Ascending aorta (tissue), 2 donors: ENCODE measurements at regions of chr17 and their contacts with region 1.

Region 1: GRCh38 chr17:44210342-44211192 is 8.9 kb downstream of the UBTF start:
- DNase-seq: peak; percentile 67 to 94
- H3K4me3 ChIP-seq: peak overlapping the region in 1 of 2 donors; percentile 14
- H3K27ac ChIP-seq: peak overlapping the region; percentile 29 to 65
- H3K4me1 ChIP-seq: peaks cover 0 to 9% of the 10 kb centered on the region in 2 donors
- H3K27me3 ChIP-seq: no peaks in the 10 kb centered on the region
- CTCF ChIP-seq: peak; percentile 98 to 100 (median 100)

Region 2: DNA sequence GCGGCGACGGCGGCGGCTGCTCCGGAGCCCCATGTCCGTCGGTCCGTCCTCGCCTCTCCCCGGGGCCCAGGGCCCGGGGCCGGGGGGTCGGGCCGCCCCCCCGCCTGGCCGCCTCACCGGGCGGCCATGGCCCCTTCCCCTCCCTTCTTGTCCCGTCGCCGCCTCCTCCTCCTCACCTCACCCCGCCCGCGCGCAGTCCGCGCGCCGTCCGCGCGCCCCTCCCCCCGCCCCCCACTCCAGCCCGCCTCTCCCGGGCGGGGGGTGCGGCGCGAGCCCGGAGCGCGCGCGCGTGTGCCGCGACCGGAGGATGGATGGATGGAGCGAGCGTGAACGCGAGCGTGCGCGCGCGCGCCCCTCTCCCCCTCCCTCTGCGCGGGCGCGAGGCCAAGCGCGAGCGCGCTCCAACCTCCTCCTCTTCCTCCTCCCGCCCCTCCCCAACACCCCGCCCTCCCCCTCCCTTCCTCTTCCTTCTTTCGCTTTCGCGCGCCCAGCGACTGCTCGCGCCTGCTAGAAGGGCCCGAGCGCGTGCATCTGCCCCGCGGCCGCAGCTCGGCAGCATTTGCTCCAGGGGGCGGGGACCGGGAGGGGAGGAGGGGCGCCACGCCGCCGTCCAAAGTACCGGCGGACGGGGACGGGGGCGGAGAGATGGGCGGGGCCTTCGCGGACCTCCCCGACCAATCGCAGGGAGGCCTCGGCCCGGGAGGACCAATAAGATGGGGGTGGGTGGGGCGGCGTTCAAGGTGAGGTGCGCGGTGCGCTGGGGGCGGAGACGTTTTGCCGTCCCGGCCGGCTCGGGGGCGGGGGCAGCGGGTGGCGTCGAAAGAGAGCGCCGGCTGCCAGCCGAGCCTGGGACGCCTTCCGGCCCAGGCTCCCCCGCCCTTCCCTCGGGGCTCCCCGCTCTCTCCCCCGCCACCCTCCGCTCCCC is 10.8 kb before region 1 on chr17 and contains the start of gene ATXN7L3:
- intact Hi-C with region 1: loop called (anchors 1 kb)
- DNase-seq: peak; percentile 94 to 99
- H3K4me3 ChIP-seq: peak within 1 kb of the TSS; percentile 98 to 99
- H3K27ac ChIP-seq: peak within 1 kb of the TSS; percentile 98 to 100
- H3K4me1 ChIP-seq: peaks cover 0 to 21% of the 10 kb centered on the region in 2 donors
- H3K27me3 ChIP-seq: no peaks in the 10 kb centered on the region
- CTCF ChIP-seq: no peak
- total RNA-seq, gene ATXN7L3: 62.8 TPM